ENCODE measurements at regions of chr10 and their contacts with region 1.

Region 1: GRCh38 chr10:17257466-17258321 is 29.7 kb downstream of the VIM start:
- DNase-seq: peak in 3 of 4 donors; percentile 37 to 83 (median 71)
- ATAC-seq: peak; percentile 98
- H3K4me3 ChIP-seq: no peak overlapping the region
- H3K27ac ChIP-seq: no peak overlapping the region
- H3K4me1 ChIP-seq: peaks cover 0 to 6% of the 10 kb centered on the region in 2 donors
- H3K27me3 ChIP-seq: no peaks in the 10 kb centered on the region
- CTCF ChIP-seq: peak; percentile 79 to 83

Region 2: GRCh38 chr10:16843252-16843870 is 414.3 kb before region 1 on chr10:
- intact Hi-C with region 1: loop called in 1 of 2 experiments (anchors 5 kb)
- DNase-seq: peak in 2 of 4 donors; percentile 74 to 77
- ATAC-seq: peak; percentile 91
- H3K4me3 ChIP-seq: no peak overlapping the region
- H3K27ac ChIP-seq: no peak overlapping the region
- H3K4me1 ChIP-seq: no peaks in the 10 kb centered on the region
- H3K27me3 ChIP-seq: no peaks in the 10 kb centered on the region
- CTCF ChIP-seq: peak; percentile 60 to 62